ENCODE measurements at regions of chr13 and their contacts with region 1.

Region 1: DNA sequence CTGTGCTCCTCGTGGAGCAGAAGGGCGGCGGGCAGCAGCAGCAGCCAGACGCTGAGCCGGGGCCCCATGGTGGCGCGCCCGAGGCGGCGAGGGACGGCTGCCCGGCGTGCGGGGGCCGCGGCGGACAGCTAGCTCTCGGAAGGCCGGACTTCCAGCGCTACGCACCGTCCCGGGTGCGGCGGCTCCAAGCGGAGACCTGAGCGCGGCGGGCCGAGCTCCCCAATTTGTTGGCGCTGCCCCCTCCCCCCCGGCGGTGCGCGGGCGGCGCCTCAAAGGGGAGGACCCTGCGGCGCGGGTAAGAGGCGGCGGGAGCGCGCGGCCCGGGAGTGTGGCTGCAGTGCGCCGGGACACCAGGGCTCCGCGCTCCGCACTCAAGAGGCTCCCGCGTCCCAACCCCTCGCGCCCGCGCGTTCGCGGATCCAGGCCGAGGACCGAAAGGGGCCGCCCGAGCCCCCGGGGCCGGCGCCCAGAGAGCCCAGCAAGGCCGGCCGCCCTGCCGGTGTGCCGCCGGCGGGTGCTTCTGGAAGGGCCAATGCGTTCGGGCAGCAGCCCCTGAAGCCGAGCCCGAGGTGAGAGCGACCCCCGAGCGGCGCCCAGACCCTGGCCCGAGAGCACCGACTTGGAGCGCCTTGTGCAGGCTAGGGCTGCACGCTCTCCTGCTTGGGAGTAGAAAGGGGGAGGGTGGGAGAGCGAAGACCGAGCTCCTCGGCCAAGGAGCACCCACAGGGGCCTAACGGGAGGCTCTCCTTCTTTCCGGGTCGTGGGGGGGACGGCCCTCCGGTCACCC is at the starts of genes COL4A1 and COL4A2:
- DNase-seq: peak; percentile 84
- H3K4me3 ChIP-seq: peak within 1 kb of the TSS; percentile 80 to 95
- H3K27ac ChIP-seq: peak within 1 kb of the TSS; percentile 66 to 79
- H3K4me1 ChIP-seq: peaks cover 33 to 37% of the 10 kb centered on the region in 2 experiments
- H3K27me3 ChIP-seq: no peaks in the 10 kb centered on the region
- CTCF ChIP-seq: no peak
- EP300 ChIP-seq: no peak
- RAD21 ChIP-seq: no peak
- polyA plus RNA-seq, gene COL4A1: 28.2 and 30.3 TPM in 2 replicates
- polyA plus RNA-seq, gene COL4A2: 61.1 and 137 TPM in 2 replicates

Region 2: GRCh38 chr13:110138010-110138699 is 169.0 kb before region 1 on chr13:
- CTCF ChIA-PET with region 1: no interaction called
- POLR2A ChIA-PET with region 1: no interaction called
- DNase-seq: peak; percentile 79
- H3K4me3 ChIP-seq: peak overlapping the region; percentile 70 to 73
- H3K27ac ChIP-seq: peak overlapping the region in 1 of 2 experiments; percentile 39; a peak in 3 of 4 replicates
- H3K4me1 ChIP-seq: peaks cover 0 to 6% of the 10 kb centered on the region in 2 experiments; a peak in 1 of 4 replicates
- H3K27me3 ChIP-seq: no peaks in the 10 kb centered on the region
- CTCF ChIP-seq: no peak
- EP300 ChIP-seq: peak; percentile 0 to 43; a peak in 1 of 4 replicates
- RAD21 ChIP-seq: no peak; the same call in 1 of the 2 replicates

Region 3: DNA sequence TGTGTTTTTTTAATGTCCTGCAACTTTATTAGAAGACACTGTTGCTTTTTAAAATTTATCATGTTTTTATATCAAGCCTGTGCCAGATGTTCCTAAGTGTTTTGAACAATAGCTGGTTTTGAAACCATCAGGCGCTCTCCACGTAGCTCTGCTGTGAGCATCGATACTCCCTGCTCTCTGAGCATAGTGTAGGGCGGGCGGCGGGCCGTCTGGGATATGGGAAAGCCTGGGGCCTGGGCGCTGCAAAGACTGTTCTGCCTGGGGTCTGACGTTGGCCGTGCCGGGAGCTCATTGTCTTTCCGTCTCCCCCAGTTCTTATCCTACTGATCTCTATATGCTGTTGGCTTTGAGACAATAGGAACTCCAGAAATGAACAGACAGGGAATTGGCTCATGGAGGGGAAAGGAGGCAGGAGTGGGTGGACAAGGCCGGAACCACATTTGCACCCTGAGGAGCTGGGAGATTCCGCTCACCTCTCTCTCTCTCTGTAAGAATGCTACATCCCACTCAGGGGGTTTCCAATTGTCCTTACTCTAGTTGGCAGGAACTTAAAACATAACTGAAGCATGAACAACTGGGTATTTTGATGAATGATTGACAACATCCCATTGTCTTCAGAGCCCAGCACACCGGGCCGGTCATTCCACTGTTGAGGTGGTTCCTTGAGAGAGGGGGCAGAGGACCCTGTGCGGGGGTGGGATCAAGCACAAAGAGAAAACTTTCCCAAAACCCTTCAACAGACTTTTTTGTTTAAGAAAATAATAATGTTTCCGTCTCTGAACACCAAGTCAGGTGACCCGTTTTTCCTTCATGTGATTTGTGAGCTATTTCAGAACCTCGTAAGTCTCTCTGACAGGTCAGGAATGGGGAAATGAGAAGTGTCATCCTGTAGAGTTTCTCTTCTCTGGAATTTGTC is 64.7 kb after region 1 on chr13:
- CTCF ChIA-PET with region 1: interaction called, 6 read pairs
- POLR2A ChIA-PET with region 1: interaction called, 10 read pairs
- DNase-seq: peak; percentile 76
- H3K4me3 ChIP-seq: peak overlapping the region in 1 of 2 experiments; percentile 41; a peak in 2 of 4 replicates
- H3K27ac ChIP-seq: peak overlapping the region; percentile 86 to 98
- H3K4me1 ChIP-seq: peaks cover 24 to 57% of the 10 kb centered on the region in 2 experiments
- H3K27me3 ChIP-seq: no peaks in the 10 kb centered on the region
- CTCF ChIP-seq: no peak
- EP300 ChIP-seq: peak; percentile 21 to 84; a peak in 3 of 4 replicates
- RAD21 ChIP-seq: peak; percentile 30; the same call in 1 of the 2 replicates

Measured in SK-N-SH (cell line).